ENCODE measurements at regions of chr21 and their contacts with region 1.

Region 1: GRCh38 chr21:45880097-45881068 is 101.2 kb upstream of the COL6A1 start:
- DNase-seq: peak; percentile 85
- ATAC-seq: peak; percentile 93
- H3K4me3 Mint-ChIP-seq: no peak overlapping the region
- H3K27ac Mint-ChIP-seq: peak overlapping the region; percentile 90
- H3K4me1 Mint-ChIP-seq: peaks cover 4% of the 10 kb centered on the region
- H3K27me3 Mint-ChIP-seq: no peaks in the 10 kb centered on the region; the same call in 1 of the 2 replicates
- CTCF ChIP-seq: peak; percentile 64

Region 2: GRCh38 chr21:45809421-45809820 is 71.0 kb before region 1 on chr21:
- CTCF ChIA-PET with region 1: no interaction called
- POLR2A ChIA-PET with region 1: no interaction called
- DNase-seq: no peak
- ATAC-seq: no peak
- H3K4me3 Mint-ChIP-seq: no peak overlapping the region
- H3K27ac Mint-ChIP-seq: no peak overlapping the region
- H3K4me1 Mint-ChIP-seq: no peaks in the 10 kb centered on the region
- H3K27me3 Mint-ChIP-seq: no peaks in the 10 kb centered on the region; the same call in 1 of the 2 replicates
- CTCF ChIP-seq: no peak

Region 3: GRCh38 chr21:45820171-45821091 is 60.0 kb before region 1 on chr21:
- CTCF ChIA-PET with region 1: interaction called, 10 read pairs
- POLR2A ChIA-PET with region 1: no interaction called
- DNase-seq: peak; percentile 89
- ATAC-seq: peak; percentile 92
- H3K4me3 Mint-ChIP-seq: no peak overlapping the region
- H3K27ac Mint-ChIP-seq: peak overlapping the region; percentile 85; the same call in 1 of the 2 replicates
- H3K4me1 Mint-ChIP-seq: peaks cover 22% of the 10 kb centered on the region
- H3K27me3 Mint-ChIP-seq: no peaks in the 10 kb centered on the region
- CTCF ChIP-seq: peak; percentile 68

Region 4: DNA sequence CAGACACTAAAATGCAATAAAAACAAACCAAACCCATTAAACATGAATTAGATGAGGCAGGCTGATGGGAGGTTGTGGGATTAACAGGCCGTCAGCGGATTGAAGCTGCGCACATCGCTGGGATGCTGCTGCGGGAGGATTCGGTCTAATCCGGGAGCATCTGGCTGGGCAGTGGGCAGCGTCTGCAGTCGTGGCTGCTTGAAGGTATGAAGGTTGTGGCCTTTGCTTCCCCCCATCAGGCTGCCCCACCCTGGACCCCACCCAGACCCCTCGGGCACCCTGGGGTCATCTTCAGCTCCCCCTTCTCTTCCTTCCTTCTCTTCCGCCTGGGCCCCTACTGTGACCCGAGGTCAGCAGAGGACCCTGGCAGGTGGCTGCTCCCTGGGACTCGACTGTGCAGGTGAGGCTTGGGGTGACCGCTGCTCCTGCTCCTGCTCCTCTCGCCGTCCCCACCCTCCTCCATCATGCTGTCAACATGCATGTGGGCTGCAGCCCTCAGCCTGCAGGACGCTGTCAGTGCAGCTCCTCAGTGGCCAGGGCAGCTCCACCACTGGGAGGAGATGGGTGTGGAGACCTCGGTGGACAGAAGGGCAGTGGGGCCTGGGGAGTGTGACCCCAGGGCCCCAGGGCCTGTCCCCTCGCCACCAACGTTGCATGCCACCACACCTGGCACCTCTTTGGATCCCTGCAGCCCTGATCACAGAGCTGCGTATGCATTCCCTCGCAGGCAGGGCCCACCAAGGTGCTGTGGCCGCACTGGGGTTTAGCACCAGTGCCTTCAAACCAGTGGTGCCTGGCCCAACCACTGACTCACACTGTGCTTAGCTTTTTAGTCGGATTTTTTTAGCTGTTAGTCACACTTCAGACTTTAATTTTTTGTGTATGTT is 11.0 kb before region 1 on chr21:
- CTCF ChIA-PET with region 1: interaction called, 12 read pairs
- POLR2A ChIA-PET with region 1: interaction called, 4 read pairs
- DNase-seq: no peak
- ATAC-seq: no peak
- H3K4me3 Mint-ChIP-seq: no peak overlapping the region
- H3K27ac Mint-ChIP-seq: no peak overlapping the region
- H3K4me1 Mint-ChIP-seq: no peaks in the 10 kb centered on the region
- H3K27me3 Mint-ChIP-seq: no peaks in the 10 kb centered on the region
- CTCF ChIP-seq: no peak

Region 5: DNA sequence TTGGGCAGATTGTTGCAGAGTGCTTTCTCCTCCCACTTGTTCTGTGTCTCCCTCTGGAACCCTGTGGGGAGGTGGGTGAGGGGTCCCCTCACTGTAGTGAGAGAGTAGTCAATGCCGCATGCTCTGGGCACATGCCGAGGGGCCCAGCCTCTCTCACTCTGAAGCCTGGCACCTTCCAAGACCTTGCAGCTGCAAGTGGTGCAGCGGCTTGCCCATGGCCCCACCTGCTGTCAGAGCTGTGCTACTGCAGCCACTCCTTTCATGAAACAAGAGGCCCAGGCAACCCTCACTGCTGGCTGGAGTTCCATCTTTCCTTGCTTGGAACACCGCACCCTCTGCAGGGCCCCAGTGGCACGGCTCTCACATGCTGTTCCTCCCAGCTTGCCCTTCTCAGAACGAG is 42.8 kb after region 1 on chr21:
- CTCF ChIA-PET with region 1: interaction called, 11 read pairs
- POLR2A ChIA-PET with region 1: no interaction called
- DNase-seq: peak; percentile 81
- ATAC-seq: peak; percentile 90
- H3K4me3 Mint-ChIP-seq: no peak overlapping the region
- H3K27ac Mint-ChIP-seq: no peak overlapping the region
- H3K4me1 Mint-ChIP-seq: no peaks in the 10 kb centered on the region
- H3K27me3 Mint-ChIP-seq: peaks cover 33% of the 10 kb centered on the region
- CTCF ChIP-seq: peak; percentile 84